PC-9 (cell line): ENCODE measurements at regions of chr1 and their contacts with region 1.

Region 1: GRCh38 chr1:155084722-155085503 is 6.3 kb downstream of the EFNA3 start:
- DNase-seq: peak; percentile 81 to 92
- H3K4me3 ChIP-seq: peak overlapping the region; percentile 70
- H3K27ac ChIP-seq: peak overlapping the region; percentile 72
- H3K4me1 ChIP-seq: peaks cover 50% of the 10 kb centered on the region
- H3K27me3 ChIP-seq: peaks cover 23% of the 10 kb centered on the region
- CTCF ChIP-seq: peak; percentile 94

Region 2: GRCh38 chr1:154479764-154480421 is 605.0 kb before region 1 on chr1:
- CTCF ChIA-PET with region 1: no interaction called
- POLR2A ChIA-PET with region 1: interaction called, 3 read pairs
- intact Hi-C with region 1: loop called (anchors 1 kb)
- DNase-seq: peak; percentile 65 to 71
- H3K4me3 ChIP-seq: no peak overlapping the region
- H3K27ac ChIP-seq: no peak overlapping the region
- H3K4me1 ChIP-seq: 0 out of 2 replicates have a peak, but pooled peaks cover 12% of the 10 kb centered on the region
- H3K27me3 ChIP-seq: no peaks in the 10 kb centered on the region
- CTCF ChIP-seq: peak; percentile 97

Region 3: GRCh38 chr1:154906621-154907081 is 178.3 kb before region 1 on chr1:
- CTCF ChIA-PET with region 1: no interaction called
- POLR2A ChIA-PET with region 1: no interaction called
- intact Hi-C with region 1: loop called (anchors 1 kb)
- DNase-seq: peak in 1 of 2 experiments; percentile 6
- H3K4me3 ChIP-seq: no peak overlapping the region
- H3K27ac ChIP-seq: no peak overlapping the region
- H3K4me1 ChIP-seq: no peaks in the 10 kb centered on the region
- H3K27me3 ChIP-seq: peaks cover 36% of the 10 kb centered on the region
- CTCF ChIP-seq: peak; percentile 60

Region 4: DNA sequence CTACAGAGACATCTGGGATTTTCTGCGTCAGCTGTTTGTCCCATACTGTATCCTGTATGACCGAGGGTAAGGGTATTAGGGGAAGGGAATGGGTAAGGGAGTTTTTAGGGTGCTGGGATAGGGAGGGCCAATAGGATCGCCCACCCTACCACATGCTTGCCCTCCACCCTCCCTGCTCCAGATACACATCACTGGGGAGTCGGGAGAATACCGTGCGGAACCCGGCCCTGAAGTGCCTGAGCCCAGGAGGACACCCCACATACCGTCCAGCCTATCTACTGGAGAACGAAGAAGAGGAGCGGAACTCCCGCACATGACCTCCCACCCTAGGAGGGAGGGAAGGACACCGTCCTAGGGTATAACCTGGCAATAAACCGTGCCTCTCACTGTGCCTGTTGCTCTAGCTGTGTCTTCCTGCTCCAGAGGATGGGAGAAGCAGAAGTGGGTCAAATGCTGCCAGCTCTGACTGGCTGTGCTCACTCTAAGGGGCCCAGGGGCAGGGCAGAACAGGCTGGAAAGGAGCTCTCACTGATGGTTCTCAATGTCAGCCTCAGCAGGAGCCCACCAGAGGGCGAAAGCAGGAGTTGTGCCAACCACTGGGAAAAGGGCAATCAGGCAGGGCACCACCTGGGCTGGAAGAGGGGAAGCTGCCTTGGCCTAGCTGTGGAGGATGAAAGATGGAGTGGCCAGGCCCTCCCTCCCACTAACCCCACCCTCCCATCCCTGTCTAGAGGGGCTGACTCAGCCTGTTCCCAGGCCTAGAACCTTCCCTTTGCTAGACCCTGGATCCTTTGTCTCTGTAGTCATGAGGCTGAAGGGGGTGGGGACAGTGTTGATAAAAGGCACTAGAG is 92.0 kb before region 1 on chr1:
- CTCF ChIA-PET with region 1: interaction called, 7 read pairs
- POLR2A ChIA-PET with region 1: interaction called, 14 read pairs
- intact Hi-C with region 1: no loop called
- DNase-seq: no peak
- H3K4me3 ChIP-seq: no peak overlapping the region
- H3K27ac ChIP-seq: no peak overlapping the region
- H3K4me1 ChIP-seq: peaks cover 19% of the 10 kb centered on the region
- H3K27me3 ChIP-seq: no peaks in the 10 kb centered on the region
- CTCF ChIP-seq: no peak; the same call in 1 of the 2 replicates

Region 5: DNA sequence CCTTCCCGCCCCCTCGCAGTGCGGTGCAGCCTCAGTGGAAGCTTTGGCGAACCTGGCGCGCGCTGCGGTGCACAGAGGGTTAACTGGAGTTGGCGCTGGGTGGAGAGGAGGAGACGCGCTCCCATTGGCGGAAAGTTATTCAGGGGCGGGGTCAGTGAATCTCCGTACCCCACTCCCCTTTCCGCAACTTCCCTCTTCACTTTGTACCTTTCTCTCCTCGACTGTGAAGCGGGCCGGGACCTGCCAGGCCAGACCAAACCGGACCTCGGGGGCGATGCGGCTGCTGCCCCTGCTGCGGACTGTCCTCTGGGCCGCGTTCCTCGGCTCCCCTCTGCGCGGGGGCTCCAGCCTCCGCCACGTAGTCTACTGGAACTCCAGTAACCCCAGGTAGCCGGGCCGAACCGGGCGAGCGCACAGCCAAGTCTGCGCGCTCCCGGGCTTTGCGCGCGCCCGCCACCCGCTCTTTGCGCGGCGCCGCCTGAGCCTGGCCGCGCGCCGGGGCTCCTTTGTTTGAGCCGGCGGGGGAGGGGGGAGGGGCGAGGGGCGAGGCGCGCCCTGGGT is 21.3 kb before region 1 on chr1 and contains the start of gene EFNA4:
- CTCF ChIA-PET with region 1: interaction called, 9 read pairs
- POLR2A ChIA-PET with region 1: no interaction called
- intact Hi-C with region 1: loop called (anchors 1 kb)
- DNase-seq: peak; percentile 79 to 82
- H3K4me3 ChIP-seq: peak within 1 kb of the TSS; percentile 74
- H3K27ac ChIP-seq: no peak within 1 kb of the TSS
- H3K4me1 ChIP-seq: peaks cover 10% of the 10 kb centered on the region
- H3K27me3 ChIP-seq: no peaks in the 10 kb centered on the region
- CTCF ChIP-seq: no peak
- total RNA-seq, gene EFNA4: 14.0 and 17.3 TPM in 2 replicates

Region 6: GRCh38 chr1:155227261-155228095 is 142.6 kb after region 1 on chr1:
- CTCF ChIA-PET with region 1: interaction called, 13 read pairs
- POLR2A ChIA-PET with region 1: no interaction called
- intact Hi-C with region 1: no loop called
- DNase-seq: peak; percentile 93 to 97
- H3K4me3 ChIP-seq: peak overlapping the region; percentile 81
- H3K27ac ChIP-seq: peak overlapping the region; percentile 98
- H3K4me1 ChIP-seq: peaks cover 41% of the 10 kb centered on the region
- H3K27me3 ChIP-seq: no peaks in the 10 kb centered on the region
- CTCF ChIP-seq: no peak; the same call in 1 of the 2 replicates

Region 7: DNA sequence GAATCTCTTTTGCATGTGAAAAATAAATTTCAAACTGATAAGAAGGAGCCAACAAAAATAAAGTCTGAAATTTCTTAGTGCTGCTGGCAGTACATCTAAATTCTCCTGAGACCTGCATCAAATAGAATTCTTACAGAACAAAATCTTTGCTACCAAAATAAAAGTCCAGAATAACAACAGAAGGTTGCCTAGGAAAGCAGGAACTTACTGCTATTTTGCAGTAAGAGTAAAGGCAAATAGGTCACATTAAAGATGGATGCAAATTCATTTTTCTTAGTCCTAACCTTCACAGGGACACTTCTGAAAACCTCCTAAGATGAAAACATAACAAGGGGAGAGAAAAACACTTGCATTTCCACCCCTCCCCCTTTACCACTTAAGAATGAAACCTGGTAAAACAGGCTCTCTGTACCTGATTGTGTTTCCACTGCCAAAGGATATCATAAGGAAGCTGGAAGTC is 294.7 kb after region 1 on chr1:
- CTCF ChIA-PET with region 1: no interaction called
- POLR2A ChIA-PET with region 1: no interaction called
- intact Hi-C with region 1: no loop called
- DNase-seq: no peak
- H3K4me3 ChIP-seq: no peak overlapping the region
- H3K27ac ChIP-seq: no peak overlapping the region
- H3K4me1 ChIP-seq: no peaks in the 10 kb centered on the region
- H3K27me3 ChIP-seq: no peaks in the 10 kb centered on the region
- CTCF ChIP-seq: no peak